Activated CD4-positive, alpha-beta memory T cell treated with anti-CD3 and anti-CD28 coated beads for 36 hours (primary cell): ENCODE measurements at regions of chr9 and their contacts with region 1.

Region 1: GRCh38 chr9:115008536-115009270 is 78.3 kb upstream of the TNFSF8 start:
- DNase-seq: peak; percentile 68
- H3K4me3 Mint-ChIP-seq: no peak overlapping the region
- H3K27ac Mint-ChIP-seq: peak overlapping the region; percentile 15
- H3K4me1 Mint-ChIP-seq: peaks cover 86% of the 10 kb centered on the region
- H3K27me3 Mint-ChIP-seq: peaks cover 2% of the 10 kb centered on the region

Region 2: DNA sequence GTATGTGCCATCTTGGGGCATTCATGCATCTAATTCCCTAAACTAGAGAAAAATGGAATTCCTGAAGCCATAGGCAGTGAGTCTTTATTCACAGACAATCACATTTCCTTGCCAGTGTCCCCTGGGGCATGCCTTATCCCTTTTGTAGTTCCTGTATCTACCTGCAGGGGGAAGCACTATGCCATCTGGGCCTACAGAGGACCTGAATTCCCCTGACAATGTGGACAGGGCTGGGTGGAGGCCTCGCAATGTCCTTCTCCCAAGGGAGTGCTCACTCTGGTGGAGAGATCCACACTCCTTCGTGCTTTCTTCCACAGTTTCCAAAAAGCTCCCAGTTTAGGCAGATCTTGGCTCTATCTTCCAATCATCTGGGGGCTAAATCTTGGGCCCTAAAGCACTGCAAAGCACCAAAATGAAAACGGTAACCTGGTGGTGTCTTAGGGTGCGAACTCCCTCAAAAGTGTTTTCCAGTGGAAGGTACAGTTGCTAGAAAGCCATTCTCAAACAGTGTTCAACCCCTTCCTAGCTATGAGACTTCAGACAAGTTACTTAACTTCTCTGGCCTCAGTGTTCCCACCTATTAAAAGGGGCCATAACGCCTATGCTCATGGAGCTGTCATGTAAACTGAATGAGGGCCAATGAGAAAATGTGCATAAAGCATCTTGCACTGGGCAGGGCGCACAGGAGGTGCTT is 520.9 kb before region 1 on chr9:
- CTCF ChIA-PET with region 1: no interaction called
- POLR2A ChIA-PET with region 1: no interaction called
- intact Hi-C with region 1: loop called (anchors 10 kb)
- DNase-seq: peak; percentile 69
- H3K4me3 Mint-ChIP-seq: no peak overlapping the region
- H3K27ac Mint-ChIP-seq: no peak overlapping the region
- H3K4me1 Mint-ChIP-seq: peaks cover 26% of the 10 kb centered on the region
- H3K27me3 Mint-ChIP-seq: peaks cover 1% of the 10 kb centered on the region

Region 3: GRCh38 chr9:114691046-114691955 is 317.4 kb before region 1 on chr9:
- CTCF ChIA-PET with region 1: interaction called, 24 read pairs
- POLR2A ChIA-PET with region 1: interaction called, 12 read pairs
- intact Hi-C with region 1: loop called (anchors 1 kb)
- DNase-seq: peak; percentile 88
- H3K4me3 Mint-ChIP-seq: peak overlapping the region; percentile 55
- H3K27ac Mint-ChIP-seq: peak overlapping the region; percentile 99
- H3K4me1 Mint-ChIP-seq: peaks cover 87% of the 10 kb centered on the region
- H3K27me3 Mint-ChIP-seq: no peaks in the 10 kb centered on the region

Region 4: GRCh38 chr9:114718801-114719221 is 289.9 kb before region 1 on chr9:
- CTCF ChIA-PET with region 1: no interaction called
- POLR2A ChIA-PET with region 1: no interaction called
- intact Hi-C with region 1: loop called (anchors 1 kb)
- DNase-seq: peak; percentile 97
- H3K4me3 Mint-ChIP-seq: peak overlapping the region; percentile 17
- H3K27ac Mint-ChIP-seq: peak overlapping the region; percentile 80
- H3K4me1 Mint-ChIP-seq: peaks cover 63% of the 10 kb centered on the region
- H3K27me3 Mint-ChIP-seq: no peaks in the 10 kb centered on the region

Region 5: DNA sequence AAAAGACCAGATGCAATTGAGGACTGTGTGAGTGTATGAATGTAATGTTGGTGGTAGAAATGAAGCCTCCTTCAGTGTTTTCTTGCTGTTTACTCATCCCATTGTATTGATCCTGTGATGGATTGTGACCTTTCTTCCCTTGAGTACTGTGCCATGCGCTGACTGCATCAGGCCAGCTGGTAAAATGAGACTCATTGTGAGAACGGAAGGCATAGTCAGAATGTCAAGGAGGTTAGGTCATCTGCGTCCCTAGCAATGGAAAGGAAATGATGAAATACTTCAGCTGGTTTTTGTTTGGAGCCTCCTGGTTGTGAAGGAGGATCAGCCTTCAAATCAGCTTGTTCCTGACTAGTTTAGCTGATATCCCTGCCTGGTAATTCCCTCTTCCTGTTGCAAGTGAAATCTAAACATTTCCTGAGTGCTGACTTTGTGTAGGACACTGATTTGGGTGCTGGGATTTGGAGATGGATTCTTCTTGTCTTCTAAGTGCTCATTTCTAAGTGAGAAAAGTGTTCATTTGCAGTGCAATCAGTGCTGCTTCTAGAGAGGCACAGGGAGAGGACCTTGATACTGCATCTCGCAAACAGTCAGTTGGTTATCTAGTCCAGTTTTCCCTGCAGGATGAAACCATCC is 113.8 kb before region 1 on chr9:
- CTCF ChIA-PET with region 1: interaction called, 3 read pairs
- POLR2A ChIA-PET with region 1: interaction called, 5 read pairs
- intact Hi-C with region 1: loop called (anchors 1 kb)
- DNase-seq: peak; percentile 76
- H3K4me3 Mint-ChIP-seq: no peak overlapping the region
- H3K27ac Mint-ChIP-seq: peak overlapping the region; percentile 77
- H3K4me1 Mint-ChIP-seq: peaks cover 52% of the 10 kb centered on the region
- H3K27me3 Mint-ChIP-seq: no peaks in the 10 kb centered on the region

Region 6: DNA sequence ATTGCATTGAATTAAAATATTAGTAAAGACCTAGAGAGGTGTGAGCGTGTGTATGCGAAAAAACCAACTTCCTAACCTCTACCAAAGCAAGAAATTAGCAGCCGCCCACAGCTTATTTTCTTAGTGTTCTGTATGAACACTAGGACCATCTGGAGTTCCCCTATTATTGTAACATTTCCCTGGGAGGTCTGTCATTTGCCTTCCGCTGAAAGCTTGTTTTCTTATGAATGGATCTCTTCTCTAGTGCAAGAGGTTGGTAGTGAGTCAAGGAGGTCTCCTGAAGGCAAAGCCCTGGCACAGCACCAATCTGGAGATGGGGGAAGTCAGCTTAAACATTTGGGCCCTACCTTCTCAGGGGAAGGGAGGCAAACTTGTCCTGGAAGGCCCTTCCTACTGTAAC is 89.1 kb before region 1 on chr9:
- CTCF ChIA-PET with region 1: interaction called, 5 read pairs
- POLR2A ChIA-PET with region 1: interaction called, 24 read pairs
- intact Hi-C with region 1: no loop called
- DNase-seq: peak; percentile 68
- H3K4me3 Mint-ChIP-seq: peak overlapping the region; percentile 10
- H3K27ac Mint-ChIP-seq: peak overlapping the region; percentile 76
- H3K4me1 Mint-ChIP-seq: peaks cover 93% of the 10 kb centered on the region
- H3K27me3 Mint-ChIP-seq: no peaks in the 10 kb centered on the region

Region 7: GRCh38 chr9:114953917-114954316 is 54.8 kb before region 1 on chr9:
- CTCF ChIA-PET with region 1: interaction called, 3 read pairs
- POLR2A ChIA-PET with region 1: interaction called, 3 read pairs
- intact Hi-C with region 1: loop called (anchors 1 kb)
- DNase-seq: peak; percentile 48
- H3K4me3 Mint-ChIP-seq: no peak overlapping the region
- H3K27ac Mint-ChIP-seq: no peak overlapping the region
- H3K4me1 Mint-ChIP-seq: peaks cover 35% of the 10 kb centered on the region
- H3K27me3 Mint-ChIP-seq: no peaks in the 10 kb centered on the region

Region 8: DNA sequence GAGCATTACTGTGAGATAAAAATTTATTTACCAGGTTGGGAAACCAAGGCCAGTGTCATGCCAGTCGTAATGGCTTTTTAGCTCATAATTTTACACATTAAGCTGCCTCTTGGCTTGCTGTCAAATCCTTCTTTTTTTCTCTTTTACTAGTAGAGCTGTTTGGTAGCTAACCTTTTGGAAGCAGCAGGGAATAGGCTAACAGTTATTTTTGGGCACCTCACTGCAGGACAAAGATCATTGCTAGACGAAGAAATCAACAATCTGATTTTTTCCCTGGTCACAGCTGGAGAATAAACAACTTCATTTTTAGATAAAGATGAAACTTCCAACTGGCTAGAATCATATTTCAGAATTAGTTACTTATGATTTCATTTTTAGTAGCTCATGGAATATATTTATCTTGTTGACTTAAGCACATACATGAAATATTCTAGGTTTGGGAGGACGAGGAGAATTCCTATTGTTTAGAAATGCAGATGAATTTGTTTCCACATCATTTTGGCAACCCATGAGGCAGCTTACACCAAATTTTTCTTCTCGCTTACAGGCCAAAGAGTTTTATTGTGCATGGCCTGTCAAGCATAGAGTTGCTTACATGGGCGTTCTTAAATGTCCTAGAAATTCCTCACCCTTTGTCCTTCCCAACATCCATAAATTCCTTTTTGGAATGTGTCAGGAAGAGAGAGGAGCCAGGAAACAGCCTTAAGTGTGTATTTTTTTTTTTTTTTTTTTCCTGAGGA is 89.7 kb after region 1 on chr9:
- CTCF ChIA-PET with region 1: no interaction called
- POLR2A ChIA-PET with region 1: no interaction called
- intact Hi-C with region 1: no loop called
- DNase-seq: no peak
- H3K4me3 Mint-ChIP-seq: no peak overlapping the region
- H3K27ac Mint-ChIP-seq: no peak overlapping the region
- H3K4me1 Mint-ChIP-seq: no peaks in the 10 kb centered on the region
- H3K27me3 Mint-ChIP-seq: peaks cover 6% of the 10 kb centered on the region